ENCODE measurements at regions of chr3 and their contacts with region 1.

Region 1: DNA sequence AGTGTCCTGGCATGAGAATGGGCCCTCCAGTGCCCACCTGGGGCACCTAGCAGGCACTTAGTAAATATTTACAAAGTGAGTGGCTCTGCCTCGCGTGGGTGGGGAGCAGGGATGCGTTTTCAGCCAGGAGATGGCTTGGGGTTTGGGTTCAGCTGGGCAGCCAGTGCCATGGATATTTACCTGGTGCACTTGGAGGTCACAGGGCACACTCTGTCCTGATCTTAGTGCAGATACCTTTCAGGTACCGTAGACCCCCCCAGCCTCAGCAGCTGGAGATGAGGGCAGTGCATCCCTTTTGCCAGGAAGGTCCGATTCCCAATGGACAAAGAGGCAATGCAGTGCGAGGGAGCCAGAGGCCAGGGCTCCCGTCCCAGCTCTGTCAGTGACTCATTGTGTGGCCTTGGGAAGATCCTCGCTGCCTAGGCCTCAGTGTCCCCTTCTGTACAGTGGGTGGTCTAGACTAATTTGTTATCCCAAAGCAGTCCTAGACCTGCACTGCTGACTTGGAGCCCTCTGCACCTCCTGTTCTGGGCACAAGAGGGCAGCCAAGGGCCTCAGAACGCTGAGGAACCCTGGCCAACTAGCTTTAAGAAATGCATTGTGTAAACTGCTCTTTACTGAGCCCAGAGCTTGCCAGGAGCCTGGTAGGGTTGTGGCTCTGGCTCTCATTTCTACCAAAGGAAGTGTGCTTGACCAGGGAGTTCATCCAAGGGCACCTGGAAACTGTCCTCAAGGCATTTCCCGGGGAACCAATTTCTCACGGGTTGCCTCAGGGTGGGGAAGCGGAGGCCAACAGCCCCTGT is 16.0 kb downstream of the HDAC11 start:
- DNase-seq: no peak
- H3K4me3 ChIP-seq: no peak overlapping the region
- H3K27me3 ChIP-seq: no peaks in the 10 kb centered on the region
- CTCF ChIP-seq: peak; percentile 95

Region 2: DNA sequence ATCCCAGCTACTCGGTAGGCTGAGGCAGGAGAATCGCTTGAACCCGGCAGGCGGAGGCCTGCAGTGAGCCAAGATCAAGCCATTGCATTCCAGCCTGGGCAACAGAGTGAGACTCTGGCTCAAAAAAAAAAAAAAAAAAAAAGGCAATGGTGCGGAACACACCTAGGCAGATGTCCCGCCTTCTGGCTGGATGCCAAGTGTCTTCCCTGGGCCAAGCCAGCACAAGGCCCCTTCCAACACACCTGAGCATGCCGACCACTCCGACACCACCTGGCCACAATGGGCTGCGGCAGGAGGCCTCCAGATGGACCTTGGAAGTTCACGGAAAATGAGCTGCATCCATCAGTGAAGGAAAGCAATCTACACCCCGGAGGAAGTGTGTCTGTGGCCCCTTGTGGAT is 95.0 kb before region 1 on chr3:
- CTCF ChIA-PET with region 1: no interaction called
- POLR2A ChIA-PET with region 1: no interaction called
- DNase-seq: no peak
- H3K4me3 ChIP-seq: no peak overlapping the region
- H3K27me3 ChIP-seq: no peaks in the 10 kb centered on the region
- CTCF ChIP-seq: no peak

Region 3: DNA sequence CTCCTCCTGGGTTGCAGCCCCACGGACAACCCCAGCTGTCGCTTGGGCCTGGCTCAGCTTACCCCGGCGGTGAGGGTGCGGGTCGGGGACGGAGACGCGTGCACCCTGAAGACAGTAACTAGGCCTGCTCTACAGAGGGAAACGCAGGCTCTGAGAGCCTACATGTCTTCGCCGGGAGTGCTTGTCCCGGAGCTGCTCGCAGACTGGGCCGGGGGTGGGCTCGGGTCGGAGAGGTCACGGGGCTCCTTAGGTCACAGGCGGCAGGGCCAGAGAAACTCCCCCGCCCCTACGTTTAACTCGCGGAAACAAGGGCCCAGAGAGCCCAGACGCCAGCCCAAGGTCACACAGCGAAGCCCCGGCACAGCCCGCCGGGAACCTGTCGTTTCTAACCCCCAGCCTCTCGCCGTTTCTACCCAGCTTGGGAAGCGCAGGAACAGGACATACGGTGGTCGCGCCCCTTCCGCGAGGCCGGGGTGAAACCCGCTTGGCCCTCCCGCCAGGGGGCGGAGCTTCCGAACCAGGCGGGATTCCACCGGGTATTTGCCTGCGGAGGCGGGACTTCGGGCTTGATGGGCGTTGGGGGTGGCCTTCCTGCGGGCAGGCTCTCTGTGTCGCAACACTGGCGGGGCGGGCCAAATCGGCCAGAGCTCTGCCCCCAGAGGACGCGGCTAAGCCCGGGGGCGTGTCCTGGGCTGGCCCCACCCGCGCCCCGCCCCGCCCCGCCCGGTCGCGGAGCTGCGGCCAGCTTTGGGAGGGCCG is 16.4 kb before region 1 on chr3 and contains the start of gene HDAC11:
- CTCF ChIA-PET with region 1: interaction called, 98 read pairs
- POLR2A ChIA-PET with region 1: no interaction called
- DNase-seq: peak; percentile 78
- H3K4me3 ChIP-seq: peak within 1 kb of the TSS; percentile 68
- H3K27me3 ChIP-seq: 0 out of 2 replicates have a peak, but pooled peaks cover under 1% of the 10 kb centered on the region
- CTCF ChIP-seq: 0 out of 2 replicates have a peak, but pooled peaks have one; percentile 14
- polyA plus RNA-seq, gene HDAC11: 9.8 and 16.0 TPM in 2 replicates

Region 4: GRCh38 chr3:13513051-13513908 is 17.2 kb after region 1 on chr3:
- CTCF ChIA-PET with region 1: interaction called, 27 read pairs
- POLR2A ChIA-PET with region 1: no interaction called
- DNase-seq: peak; percentile 91
- H3K4me3 ChIP-seq: no peak overlapping the region
- H3K27me3 ChIP-seq: no peaks in the 10 kb centered on the region
- CTCF ChIP-seq: no peak

Region 5: GRCh38 chr3:13611221-13611620 is 115.1 kb after region 1 on chr3:
- CTCF ChIA-PET with region 1: interaction called, 11 read pairs
- POLR2A ChIA-PET with region 1: no interaction called
- DNase-seq: no peak
- H3K4me3 ChIP-seq: no peak overlapping the region
- H3K27me3 ChIP-seq: no peaks in the 10 kb centered on the region
- CTCF ChIP-seq: no peak

Region 6: DNA sequence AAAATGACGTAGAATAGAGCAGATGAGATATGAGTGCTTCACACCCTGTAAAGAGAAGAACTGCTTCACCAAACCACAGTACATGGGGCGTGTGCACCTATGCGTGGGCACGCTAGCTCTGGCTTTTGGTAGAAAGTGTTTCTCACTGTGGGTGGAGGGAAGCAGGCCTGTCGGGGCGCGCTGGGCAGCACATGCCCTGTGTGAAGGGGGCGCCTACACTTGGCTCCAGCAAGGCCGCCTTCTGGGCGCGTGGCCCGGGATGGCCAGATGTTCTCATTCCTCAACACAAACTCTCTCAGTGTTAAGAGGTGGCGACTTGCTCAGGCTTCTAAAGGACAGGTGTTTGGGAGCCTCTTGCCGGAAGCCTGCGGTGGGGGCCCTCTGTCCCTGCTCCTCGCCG is 142.8 kb after region 1 on chr3:
- CTCF ChIA-PET with region 1: interaction called, 655 read pairs
- POLR2A ChIA-PET with region 1: no interaction called
- DNase-seq: no peak
- H3K4me3 ChIP-seq: no peak overlapping the region
- H3K27me3 ChIP-seq: no peaks in the 10 kb centered on the region
- CTCF ChIP-seq: no peak

Measured in BJ (cell line).